ENCODE measurements at regions of chr12 and their contacts with region 1.

Region 1: GRCh38 chr12:11830307-11830801 is 180.9 kb downstream of the ETV6 start:
- DNase-seq: peak; percentile 24
- ATAC-seq: peak; percentile 42
- H3K4me3 Mint-ChIP-seq: no peak overlapping the region
- H3K27ac Mint-ChIP-seq: no peak overlapping the region
- H3K4me1 Mint-ChIP-seq: peaks cover 55% of the 10 kb centered on the region
- H3K27me3 Mint-ChIP-seq: no peaks in the 10 kb centered on the region

Region 2: DNA sequence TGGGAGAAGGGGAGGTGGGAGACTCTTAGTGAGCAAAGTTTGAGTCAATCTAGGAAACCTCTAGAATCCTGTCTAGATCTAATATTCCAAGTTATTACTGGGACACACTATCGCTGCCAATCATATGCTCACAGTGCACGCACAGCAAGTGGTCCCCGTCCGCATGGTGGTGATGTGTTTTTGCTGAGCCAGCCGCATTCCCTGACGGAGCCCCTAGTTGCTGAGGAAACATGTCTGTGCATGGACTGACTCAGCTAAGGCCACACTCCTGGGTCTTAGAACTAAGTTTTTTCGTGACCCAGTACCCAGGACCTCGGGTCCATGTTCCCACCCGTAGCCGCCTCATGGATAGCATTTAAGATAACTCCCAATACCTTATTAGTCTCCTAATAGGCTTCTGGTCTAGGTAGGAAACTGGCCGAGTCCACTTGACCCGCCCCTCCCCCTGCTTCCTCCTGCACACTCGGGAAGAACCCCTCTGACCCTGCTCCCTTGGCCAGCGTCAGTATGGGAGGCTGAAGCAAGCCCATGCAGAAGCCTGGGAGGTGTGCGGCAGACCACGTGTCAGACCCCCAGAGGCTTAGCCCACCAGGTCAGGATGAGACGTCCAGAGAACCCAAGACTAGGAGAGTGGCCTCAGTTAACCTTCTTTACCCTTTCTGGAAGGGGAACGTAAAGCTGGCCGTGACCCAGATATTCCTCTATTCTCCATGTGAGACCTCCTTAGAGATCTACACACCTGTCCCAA is 19.6 kb after region 1 on chr12:
- CTCF ChIA-PET with region 1: no interaction called
- POLR2A ChIA-PET with region 1: no interaction called
- intact Hi-C with region 1: loop called in 1 of 2 experiments (anchors 2 kb)
- DNase-seq: no peak
- ATAC-seq: no peak
- H3K4me3 Mint-ChIP-seq: no peak overlapping the region
- H3K27ac Mint-ChIP-seq: no peak overlapping the region
- H3K4me1 Mint-ChIP-seq: peaks cover 16% of the 10 kb centered on the region
- H3K27me3 Mint-ChIP-seq: no peaks in the 10 kb centered on the region

Region 3: GRCh38 chr12:12736759-12737676 is 906.7 kb after region 1 on chr12:
- CTCF ChIA-PET with region 1: no interaction called
- POLR2A ChIA-PET with region 1: no interaction called
- intact Hi-C with region 1: no loop called
- DNase-seq: peak; percentile 65
- ATAC-seq: peak; percentile 87
- H3K4me3 Mint-ChIP-seq: peak overlapping the region; percentile 32
- H3K27ac Mint-ChIP-seq: peak overlapping the region; percentile 75
- H3K4me1 Mint-ChIP-seq: peaks cover 35% of the 10 kb centered on the region
- H3K27me3 Mint-ChIP-seq: no peaks in the 10 kb centered on the region